PC-3 (cell line): ENCODE measurements at regions of chr12 and their contacts with region 1.

Region 1: GRCh38 chr12:32896432-32897273 is at the start of gene PKP2:
- DNase-seq: peak; percentile 93
- ATAC-seq: peak; percentile 83
- H3K4me3 ChIP-seq: peak within 1 kb of the TSS; percentile 73
- H3K27ac ChIP-seq: peak within 1 kb of the TSS; percentile 74
- H3K4me1 ChIP-seq: peaks cover 27% of the 10 kb centered on the region
- H3K27me3 ChIP-seq: no peaks in the 10 kb centered on the region
- CTCF ChIP-seq: no peak
- total RNA-seq, gene PKP2: 12.7 TPM in 2 replicates

Region 2: GRCh38 chr12:32322354-32322753 is 574.3 kb before region 1 on chr12:
- CTCF ChIA-PET with region 1: no interaction called
- POLR2A ChIA-PET with region 1: no interaction called
- intact Hi-C with region 1: no loop called
- DNase-seq: no peak
- ATAC-seq: no peak
- H3K4me3 ChIP-seq: no peak overlapping the region
- H3K27ac ChIP-seq: no peak overlapping the region
- H3K4me1 ChIP-seq: no peaks in the 10 kb centered on the region
- H3K27me3 ChIP-seq: no peaks in the 10 kb centered on the region
- CTCF ChIP-seq: no peak

Region 3: GRCh38 chr12:32877601-32878459 is 18.8 kb before region 1 on chr12:
- CTCF ChIA-PET with region 1: no interaction called
- POLR2A ChIA-PET with region 1: interaction called, 13 read pairs
- intact Hi-C with region 1: no loop called
- DNase-seq: no peak
- ATAC-seq: no peak
- H3K4me3 ChIP-seq: no peak overlapping the region
- H3K27ac ChIP-seq: peak overlapping the region; percentile 34
- H3K4me1 ChIP-seq: no peaks in the 10 kb centered on the region
- H3K27me3 ChIP-seq: no peaks in the 10 kb centered on the region
- CTCF ChIP-seq: no peak